ENCODE measurements at regions of chr1 and their contacts with region 1.

Region 1: DNA sequence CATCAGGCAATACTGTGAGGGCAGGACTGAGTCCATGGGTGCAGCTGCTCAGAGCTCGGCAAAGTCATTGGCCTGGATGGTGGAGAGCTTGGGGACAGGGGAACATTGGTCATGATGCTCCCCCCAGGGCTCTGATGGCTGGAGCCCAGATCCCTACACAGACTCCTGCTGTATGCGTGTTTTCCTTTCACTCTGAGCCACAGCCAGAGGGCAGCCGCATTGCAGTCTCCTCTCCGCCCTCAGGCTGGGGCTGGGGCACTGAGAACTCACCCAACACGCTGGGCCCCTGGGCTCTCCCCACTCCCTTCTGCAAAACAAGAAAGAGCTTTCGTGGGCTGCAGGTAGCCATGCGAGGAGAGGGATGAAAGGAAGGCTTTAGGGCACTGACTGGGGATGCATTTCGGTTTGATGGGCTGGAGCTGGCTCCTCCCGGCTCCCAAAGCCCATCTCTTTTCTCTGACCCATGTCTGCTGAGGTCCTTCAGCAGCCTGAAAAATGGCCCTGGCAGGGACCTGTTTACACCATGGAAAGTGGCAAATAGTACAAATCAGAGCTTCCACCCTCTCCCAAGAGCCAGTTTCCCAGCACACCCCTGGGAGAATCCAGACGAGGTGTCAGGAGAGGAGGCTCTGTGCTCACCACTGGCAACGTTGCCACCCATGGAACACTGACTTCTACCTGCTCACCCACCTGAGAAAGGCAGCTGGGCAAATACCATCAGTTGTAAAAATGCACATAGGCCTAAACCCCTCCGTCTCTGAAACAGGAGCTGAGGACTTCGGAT is 43.8 kb downstream of the CAPN2 start:
- DNase-seq: peak; percentile 48 to 97 (median 74)

Region 2: GRCh38 chr1:223500560-223501425 is 255.4 kb before region 1 on chr1:
- intact Hi-C with region 1: no loop called
- DNase-seq: peak in 5 of 10 donors; percentile 20 to 84 (median 62)

Region 3: GRCh38 chr1:223802602-223803001 is 46.4 kb after region 1 on chr1:
- intact Hi-C with region 1: loop called (anchors 2 kb)
- DNase-seq: peak in 1 of 10 donors; percentile 27